Mammary epithelial cell (primary cell): ENCODE measurements at regions of chr6 and their contacts with region 1.

Region 1: GRCh38 chr6:144349690-144350527 is 64.8 kb downstream of the UTRN start:
- DNase-seq: peak; percentile 72
- H3K4me3 ChIP-seq: peak overlapping the region; percentile 2 to 19 (median 10)
- H3K27ac ChIP-seq: peak overlapping the region; percentile 54
- H3K4me1 ChIP-seq: peaks cover 31% of the 10 kb centered on the region
- H3K27me3 ChIP-seq: no peaks in the 10 kb centered on the region
- CTCF ChIP-seq: no peak

Region 2: DNA sequence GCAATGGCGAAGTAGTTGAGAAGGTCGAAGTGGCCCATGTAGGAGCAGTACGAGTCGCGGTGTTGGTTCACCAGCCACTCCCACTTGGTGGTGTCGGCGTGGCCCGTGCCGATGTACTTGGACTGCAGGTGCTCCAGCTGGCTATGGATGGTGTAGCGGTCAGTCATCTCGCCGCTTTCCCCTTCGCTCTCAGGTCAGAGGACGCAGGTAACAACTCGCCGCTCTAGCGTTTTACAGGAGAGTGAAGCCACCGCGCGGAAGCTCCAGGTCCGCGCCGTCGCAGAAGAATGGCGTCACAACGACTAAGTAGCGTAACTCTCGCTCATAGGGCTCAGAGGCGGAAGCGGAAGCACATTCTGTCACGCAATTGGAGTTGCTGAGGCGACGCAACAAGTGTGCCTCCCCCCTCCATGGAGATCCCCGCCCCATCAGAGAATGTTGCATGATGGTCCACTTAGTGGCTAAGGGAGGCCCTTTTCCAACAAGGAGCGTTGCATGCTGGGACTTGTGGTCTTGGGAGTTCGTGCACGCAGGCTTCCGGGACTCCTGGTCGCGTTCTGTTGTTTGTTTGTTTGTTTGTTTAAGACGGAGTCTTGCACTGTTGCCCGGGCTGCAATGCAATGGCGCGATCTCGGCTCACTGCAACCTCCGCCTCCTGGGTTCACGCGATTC is 254.4 kb before region 1 on chr6 and contains the start of gene SF3B5:
- CTCF ChIA-PET with region 1: no interaction called
- dilution Hi-C with region 1: no loop called
- in situ Hi-C with region 1: no loop called
- intact Hi-C with region 1: loop called (anchors 10 kb)
- DNase-seq: peak; percentile 100
- H3K4me3 ChIP-seq: peak within 1 kb of the TSS; percentile 58 to 91 (median 61)
- H3K27ac ChIP-seq: peak within 1 kb of the TSS; percentile 77
- H3K4me1 ChIP-seq: peaks cover 6% of the 10 kb centered on the region
- H3K27me3 ChIP-seq: no peaks in the 10 kb centered on the region
- CTCF ChIP-seq: no peak
- total RNA-seq, gene SF3B5: 81.9 to 132 TPM